Lower leg skin (tissue), 4 donors: ENCODE measurements at regions of chr15 and their contacts with region 1.

Region 1: DNA sequence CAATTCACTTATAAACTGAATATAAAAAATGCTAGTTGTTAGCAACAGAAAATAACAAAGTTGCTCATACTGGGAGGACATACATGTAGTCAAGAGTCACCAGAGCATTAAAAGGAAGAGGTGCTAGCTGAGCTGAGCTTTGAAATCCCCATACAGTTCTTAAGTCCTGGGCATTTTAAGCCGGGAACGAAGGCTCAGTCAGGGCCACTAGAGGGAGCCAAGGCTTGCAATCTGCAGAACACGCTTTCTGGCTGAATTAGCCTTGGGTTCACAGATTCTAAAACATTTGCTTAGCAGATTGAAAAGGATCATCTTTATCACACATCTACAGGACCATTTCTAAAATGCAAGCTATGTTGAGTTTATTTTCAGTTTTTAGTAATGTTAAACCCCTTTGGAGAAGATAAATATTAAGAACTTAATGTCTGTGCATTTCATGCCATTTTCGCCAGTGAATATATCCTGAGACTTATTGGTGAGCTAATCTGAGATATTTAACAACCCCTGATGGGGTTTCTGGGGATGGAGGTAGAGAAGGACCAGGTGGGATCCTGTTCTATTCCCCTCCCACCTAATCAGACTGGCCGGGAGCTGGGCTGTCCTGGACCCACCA is 26.3 kb upstream of the MNS1 start:
- DNase-seq: peak; percentile 64 to 90
- H3K4me3 ChIP-seq: no peak overlapping the region
- CTCF ChIP-seq: no peak
- POLR2A ChIP-seq: no peak

Region 2: GRCh38 chr15:56598991-56599390 is 107.8 kb after region 1 on chr15:
- intact Hi-C with region 1: no loop called
- DNase-seq: no peak
- H3K4me3 ChIP-seq: no peak overlapping the region
- CTCF ChIP-seq: no peak
- POLR2A ChIP-seq: no peak

Region 3: GRCh38 chr15:56653787-56654186 is 162.6 kb after region 1 on chr15:
- intact Hi-C with region 1: no loop called
- DNase-seq: no peak
- H3K4me3 ChIP-seq: no peak overlapping the region
- CTCF ChIP-seq: no peak
- POLR2A ChIP-seq: no peak

Region 4: DNA sequence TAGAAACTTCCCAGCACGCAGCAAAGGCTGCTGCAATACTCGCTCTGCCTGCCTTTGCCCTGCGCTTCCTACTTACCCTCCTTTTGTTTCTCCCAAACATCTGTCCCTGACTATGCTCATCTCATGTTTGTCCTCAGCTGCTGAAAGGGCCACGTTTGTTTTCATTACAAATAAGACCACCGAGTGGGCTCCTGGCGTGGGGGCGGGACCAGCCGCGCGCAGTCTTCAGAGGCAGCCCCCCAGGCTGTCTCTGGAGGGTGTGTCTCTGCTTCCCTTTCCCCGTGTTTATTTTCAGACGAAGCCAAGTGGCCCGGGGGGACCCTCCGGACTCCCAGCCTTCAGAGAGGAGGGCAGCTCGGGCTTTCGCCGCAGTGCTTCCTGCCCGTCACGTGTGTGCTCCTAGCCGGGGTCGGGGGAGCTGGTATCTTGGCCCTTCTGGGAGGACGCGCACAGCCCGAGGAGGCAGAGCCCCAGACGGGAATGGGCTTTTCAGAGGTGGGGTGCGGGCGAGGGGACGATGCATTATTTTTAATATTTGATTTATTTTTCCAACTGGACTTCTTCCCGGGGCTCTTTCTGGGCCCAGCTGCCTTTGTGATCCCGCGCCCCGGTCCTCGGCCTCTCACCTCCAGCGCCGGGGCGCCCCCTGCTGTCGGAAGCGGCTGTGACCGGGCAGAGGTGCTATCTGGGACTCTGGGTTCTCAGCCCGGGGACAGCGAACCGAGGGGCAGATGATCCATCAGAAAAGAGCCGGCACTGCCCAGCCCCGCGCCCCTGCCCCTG is 815.1 kb after region 1 on chr15:
- intact Hi-C with region 1: loop called (anchors 10 kb)
- DNase-seq: peak; percentile 78 to 97
- H3K4me3 ChIP-seq: peak overlapping the region; percentile 36
- CTCF ChIP-seq: peak in 1 of 3 donors; percentile 83
- POLR2A ChIP-seq: no peak